Gastrocnemius medialis (tissue), 4 donors: ENCODE measurements at regions of chr17 and their contacts with region 1.

Region 1: DNA sequence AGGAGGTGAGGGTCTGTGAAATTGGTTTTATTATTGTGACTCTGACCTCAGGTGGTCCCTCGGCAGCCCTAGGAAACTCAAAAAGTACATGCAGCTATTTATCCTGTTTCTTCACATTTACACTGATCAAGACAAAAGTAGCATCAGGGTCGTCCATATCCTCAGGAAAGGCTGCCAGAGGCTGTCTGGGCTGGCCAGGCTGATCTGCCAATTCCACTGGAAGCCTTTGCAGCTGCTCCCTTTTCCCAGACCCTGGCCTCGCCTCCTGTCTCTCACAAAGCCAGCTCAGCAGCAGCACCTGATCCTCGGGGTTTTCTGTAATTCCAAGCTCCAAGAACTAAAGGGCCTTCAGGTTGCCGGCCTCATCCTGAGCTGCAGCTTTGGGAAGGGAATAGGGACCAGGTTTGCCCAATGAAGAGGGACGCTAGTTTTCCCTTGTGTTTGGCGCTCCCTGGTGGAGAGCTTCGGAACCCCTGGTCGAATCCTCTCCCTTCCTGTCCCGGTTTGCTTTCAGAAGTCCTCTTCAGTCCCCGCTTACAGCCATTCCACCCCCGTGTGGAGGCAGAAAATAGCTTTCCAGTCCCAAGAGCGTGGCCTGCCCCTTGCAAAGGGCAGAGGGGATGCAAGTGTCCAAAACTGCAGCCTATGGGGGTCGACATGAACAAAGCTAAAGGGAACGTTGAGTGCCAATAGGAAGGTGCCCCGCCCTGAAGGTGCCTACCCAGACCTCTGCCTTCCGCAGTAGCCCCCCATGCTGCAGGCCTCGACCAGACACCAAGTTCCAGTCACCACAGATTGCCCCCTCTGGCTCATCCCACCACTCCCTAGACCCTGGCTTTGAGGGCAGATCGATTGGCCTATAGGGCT is 13.4 kb downstream of the MFSD6L start:
- DNase-seq: peak; percentile 14 to 25
- ATAC-seq: no peak
- H3K4me3 ChIP-seq: no peak overlapping the region
- H3K27ac ChIP-seq: no peak overlapping the region
- H3K4me1 ChIP-seq: no peaks in the 10 kb centered on the region
- H3K27me3 ChIP-seq: no peaks in the 10 kb centered on the region
- CTCF ChIP-seq: peak in 4 of 5 experiments; percentile 45 to 65 (median 57)
- POLR2A ChIP-seq: no peak

Region 2: GRCh38 chr17:8727065-8727511 is 58.7 kb before region 1 on chr17:
- in situ Hi-C with region 1: loop called in 1 of 4 experiments (anchors 10 kb)
- intact Hi-C with region 1: no loop called
- DNase-seq: no peak
- ATAC-seq: no peak
- H3K4me3 ChIP-seq: no peak overlapping the region
- H3K27ac ChIP-seq: no peak overlapping the region
- H3K4me1 ChIP-seq: no peaks in the 10 kb centered on the region
- H3K27me3 ChIP-seq: no peaks in the 10 kb centered on the region
- CTCF ChIP-seq: no peak
- POLR2A ChIP-seq: no peak